Calu3 (cell line): ENCODE measurements at regions of chr18 and their contacts with region 1.

Region 1: DNA sequence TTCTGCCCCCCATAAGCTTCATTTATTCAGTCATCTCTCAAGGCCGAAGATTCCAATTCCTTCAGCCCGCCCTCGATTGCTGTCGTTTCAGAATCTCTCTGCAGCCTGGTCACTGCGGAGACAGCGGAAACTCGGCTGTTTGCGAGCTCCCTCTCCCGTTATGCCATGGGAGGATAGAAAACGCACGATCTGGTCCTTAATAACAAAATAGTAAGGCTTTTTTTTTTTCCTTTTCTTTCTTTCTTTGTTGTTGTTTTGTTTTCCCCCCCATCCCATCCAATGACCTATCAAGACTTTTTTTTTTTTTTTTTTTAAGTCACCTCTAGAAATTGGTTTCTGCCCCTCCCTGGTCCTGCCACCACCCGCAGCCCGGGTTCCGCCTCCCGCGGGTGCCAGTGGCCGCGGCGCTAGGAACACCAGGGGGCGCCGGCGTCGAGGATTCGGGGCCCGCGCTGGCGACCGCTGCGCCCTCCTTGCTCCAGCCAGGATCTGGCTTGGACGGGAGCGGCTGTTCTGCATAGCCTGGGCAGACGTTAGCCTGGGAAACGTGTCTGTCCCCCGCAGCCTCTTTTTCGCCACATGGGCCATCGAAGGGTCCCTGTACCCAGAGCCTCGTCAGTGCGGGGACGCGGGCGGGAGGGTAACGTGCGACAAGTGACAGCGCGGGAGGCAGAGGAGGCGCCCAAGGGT is 10.1 kb downstream of the CPLX4 start:
- DNase-seq: peak; percentile 92
- H3K4me3 Mint-ChIP-seq: peak overlapping the region; percentile 42
- H3K27ac Mint-ChIP-seq: no peak overlapping the region
- H3K4me1 Mint-ChIP-seq: no peaks in the 10 kb centered on the region
- H3K27me3 Mint-ChIP-seq: peaks cover 57% of the 10 kb centered on the region
- CTCF ChIP-seq: peak; percentile 92

Region 2: GRCh38 chr18:58998401-58999203 is 309.8 kb before region 1 on chr18:
- CTCF ChIA-PET with region 1: no interaction called
- intact Hi-C with region 1: no loop called
- DNase-seq: no peak
- H3K4me3 Mint-ChIP-seq: no peak overlapping the region
- H3K27ac Mint-ChIP-seq: no peak overlapping the region
- H3K4me1 Mint-ChIP-seq: peaks cover 51% of the 10 kb centered on the region
- H3K27me3 Mint-ChIP-seq: no peaks in the 10 kb centered on the region
- CTCF ChIP-seq: no peak

Region 3: GRCh38 chr18:59056706-59057492 is 251.5 kb before region 1 on chr18:
- CTCF ChIA-PET with region 1: no interaction called
- intact Hi-C with region 1: no loop called
- DNase-seq: peak; percentile 59
- H3K4me3 Mint-ChIP-seq: no peak overlapping the region
- H3K27ac Mint-ChIP-seq: no peak overlapping the region
- H3K4me1 Mint-ChIP-seq: peaks cover 17% of the 10 kb centered on the region
- H3K27me3 Mint-ChIP-seq: no peaks in the 10 kb centered on the region
- CTCF ChIP-seq: no peak

Region 4: DNA sequence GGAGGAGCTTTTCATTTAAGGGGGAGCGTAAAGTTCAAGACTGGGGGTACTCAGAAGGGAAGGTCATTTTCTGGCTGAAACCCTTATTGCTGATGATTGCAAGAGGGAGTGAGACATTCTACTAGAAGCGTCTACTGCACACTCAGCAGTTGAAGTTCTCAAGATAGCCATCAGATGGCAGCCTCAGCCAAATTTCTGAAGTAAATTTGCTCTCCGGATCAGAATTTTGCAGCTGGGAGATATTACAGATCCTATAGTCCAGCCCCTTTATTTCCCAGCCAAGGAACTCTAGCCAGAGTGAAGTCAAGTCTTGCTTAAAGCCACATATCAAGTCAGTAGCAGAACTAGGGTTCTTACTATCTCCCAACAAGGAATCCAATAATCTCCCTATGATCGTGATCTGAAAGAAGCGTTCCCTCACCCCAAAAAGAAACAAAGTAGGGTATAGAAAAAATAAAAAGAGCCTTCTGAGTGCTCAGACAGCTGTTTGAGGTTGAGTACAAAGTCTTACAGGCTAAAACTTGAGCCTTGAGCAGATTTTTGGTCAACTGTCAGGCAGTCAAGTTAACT is 59.1 kb before region 1 on chr18:
- CTCF ChIA-PET with region 1: interaction called, 13 read pairs
- intact Hi-C with region 1: loop called (anchors 1 kb)
- DNase-seq: peak; percentile 70
- H3K4me3 Mint-ChIP-seq: no peak overlapping the region
- H3K27ac Mint-ChIP-seq: no peak overlapping the region
- H3K4me1 Mint-ChIP-seq: peaks cover 17% of the 10 kb centered on the region
- H3K27me3 Mint-ChIP-seq: peaks cover 94% of the 10 kb centered on the region
- CTCF ChIP-seq: peak; percentile 74